ENCODE measurements at regions of chr1 and their contacts with region 1.

Region 1: GRCh38 chr1:145927063-145927886 is at the start of gene RBM8A:
- DNase-seq: peak; percentile 99
- H3K4me3 ChIP-seq: peak within 1 kb of the TSS; percentile 71 to 85 (median 77)
- H3K27ac ChIP-seq: peak within 1 kb of the TSS; percentile 87 to 96 (median 94)
- H3K4me1 ChIP-seq: peaks cover 10 to 25% (median 23%) of the 10 kb centered on the region in 4 donors
- H3K27me3 ChIP-seq: no peaks in the 10 kb centered on the region
- CTCF ChIP-seq: peak; percentile 67 to 81 (median 69)
- EP300 ChIP-seq: no peak
- POLR2A ChIP-seq: peak; percentile 97
- total RNA-seq, gene RBM8A: 42.8 to 119 (median 69.7) TPM

Region 2: GRCh38 chr1:145823565-145824498 is 103.4 kb before region 1 on chr1 and contains the starts of genes POLR3C and RNF115:
- intact Hi-C with region 1: no loop called
- DNase-seq: peak; percentile 98
- H3K4me3 ChIP-seq: peak within 1 kb of the TSS; percentile 65 to 89 (median 84)
- H3K27ac ChIP-seq: peak within 1 kb of the TSS; percentile 90 to 95 (median 90)
- H3K4me1 ChIP-seq: peaks cover 8 to 30% (median 27%) of the 10 kb centered on the region in 4 donors
- H3K27me3 ChIP-seq: no peaks in the 10 kb centered on the region
- CTCF ChIP-seq: peak in 1 of 3 experiments; percentile 4
- EP300 ChIP-seq: no peak
- POLR2A ChIP-seq: peak; percentile 69
- total RNA-seq, gene POLR3C: 22.3 to 34.1 (median 27.8) TPM
- total RNA-seq, gene RNF115: 37.8 to 46.3 (median 40.3) TPM

Region 3: DNA sequence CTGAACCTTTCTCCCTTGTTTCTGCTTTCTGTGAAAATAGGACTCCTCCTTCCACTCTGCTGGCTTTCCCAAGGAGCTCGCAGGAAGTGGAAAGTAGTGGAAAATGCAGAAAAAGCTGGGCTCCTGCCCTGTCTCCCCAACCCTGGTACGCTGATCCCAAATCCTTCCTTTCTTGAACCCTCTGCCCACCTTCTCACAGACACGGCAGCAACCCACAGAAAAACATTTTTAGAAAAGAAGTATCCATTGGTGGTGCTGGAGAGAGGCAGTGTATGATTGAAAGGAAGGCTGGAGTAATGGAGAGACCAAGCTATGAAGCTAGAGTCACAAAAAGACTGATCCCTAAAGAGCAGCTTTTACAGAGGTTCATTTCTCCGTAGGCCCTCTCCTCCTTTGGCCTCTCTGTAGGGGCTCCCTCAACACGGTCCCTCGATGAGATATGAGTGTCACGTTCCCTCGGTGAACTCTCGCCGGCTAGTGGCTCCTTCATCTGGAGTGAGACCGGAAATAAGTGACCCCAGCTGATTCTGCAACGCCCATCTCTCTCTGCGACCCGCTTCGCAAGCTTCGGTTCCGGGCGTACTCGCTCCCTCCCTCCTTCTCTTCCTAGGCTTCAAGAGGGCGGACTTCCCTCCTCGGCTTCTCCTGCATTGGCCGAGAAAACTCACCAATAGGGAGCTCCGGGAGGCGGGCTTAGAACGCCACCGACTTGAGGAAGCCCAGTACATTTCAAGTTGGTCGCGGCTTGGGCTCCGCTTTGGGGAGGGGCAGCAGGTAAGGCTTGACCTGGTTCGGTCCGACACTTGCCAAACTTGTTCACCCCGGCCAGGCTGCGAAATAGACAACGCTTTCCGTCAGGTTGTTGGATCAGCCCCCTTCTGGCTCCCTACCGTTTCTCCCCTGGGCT is 37.0 kb after region 1 on chr1 and contains the starts of genes ANKRD34A and POLR3GL:
- intact Hi-C with region 1: loop called (anchors 5 kb)
- DNase-seq: peak; percentile 98
- H3K4me3 ChIP-seq: peak within 1 kb of the TSS; percentile 58 to 76 (median 68)
- H3K27ac ChIP-seq: peak within 1 kb of the TSS; percentile 98 to 100 (median 98)
- H3K4me1 ChIP-seq: peaks cover 27 to 66% (median 64%) of the 10 kb centered on the region in 4 donors
- H3K27me3 ChIP-seq: no peaks in the 10 kb centered on the region
- CTCF ChIP-seq: no peak
- EP300 ChIP-seq: no peak
- POLR2A ChIP-seq: peak; percentile 54
- total RNA-seq, gene ANKRD34A: 0.66 to 1.7 (median 1.3) TPM
- total RNA-seq, gene POLR3GL: 29.0 to 41.5 (median 35.5) TPM

Measured in esophagus muscularis mucosa (tissue), 4 donors.